Mammary epithelial cell (primary cell): ENCODE measurements at regions of chr11 and their contacts with region 1.

Region 1: DNA sequence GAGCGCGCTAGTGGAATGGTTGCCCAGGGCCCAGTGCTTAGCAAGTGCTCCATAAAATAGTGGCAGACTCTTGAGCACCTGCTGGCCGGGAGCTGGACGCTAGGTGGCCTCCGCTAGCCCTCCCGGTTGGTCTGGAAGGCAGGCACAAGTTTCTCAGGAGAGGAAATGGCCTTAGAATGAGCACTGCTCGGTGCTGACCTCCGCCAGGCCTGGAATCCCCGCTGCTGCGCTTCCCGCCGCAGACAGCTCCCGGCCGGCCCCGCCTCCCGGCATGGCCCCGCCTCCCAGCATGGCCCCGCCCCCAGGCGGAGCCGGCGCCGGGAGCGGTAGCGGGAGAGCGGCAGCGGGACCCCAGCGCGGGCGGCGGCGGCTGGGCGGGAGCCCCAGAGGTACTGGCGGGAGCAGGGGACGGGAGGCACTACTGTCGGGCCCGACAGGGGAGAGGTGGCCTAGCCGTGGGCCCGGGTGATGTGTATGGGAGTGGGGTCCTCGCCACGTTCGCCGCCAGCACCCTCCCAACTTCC is at the start of gene SIPA1:
- DNase-seq: peak; percentile 73
- H3K4me3 ChIP-seq: peak within 1 kb of the TSS; percentile 65 to 73 (median 72)
- H3K27ac ChIP-seq: peak within 1 kb of the TSS; percentile 20
- H3K4me1 ChIP-seq: peaks cover 11% of the 10 kb centered on the region
- H3K27me3 ChIP-seq: no peaks in the 10 kb centered on the region
- CTCF ChIP-seq: peak in 1 of 2 donors; percentile 36
- total RNA-seq, gene SIPA1: 13.2 to 16.1 TPM

Region 2: DNA sequence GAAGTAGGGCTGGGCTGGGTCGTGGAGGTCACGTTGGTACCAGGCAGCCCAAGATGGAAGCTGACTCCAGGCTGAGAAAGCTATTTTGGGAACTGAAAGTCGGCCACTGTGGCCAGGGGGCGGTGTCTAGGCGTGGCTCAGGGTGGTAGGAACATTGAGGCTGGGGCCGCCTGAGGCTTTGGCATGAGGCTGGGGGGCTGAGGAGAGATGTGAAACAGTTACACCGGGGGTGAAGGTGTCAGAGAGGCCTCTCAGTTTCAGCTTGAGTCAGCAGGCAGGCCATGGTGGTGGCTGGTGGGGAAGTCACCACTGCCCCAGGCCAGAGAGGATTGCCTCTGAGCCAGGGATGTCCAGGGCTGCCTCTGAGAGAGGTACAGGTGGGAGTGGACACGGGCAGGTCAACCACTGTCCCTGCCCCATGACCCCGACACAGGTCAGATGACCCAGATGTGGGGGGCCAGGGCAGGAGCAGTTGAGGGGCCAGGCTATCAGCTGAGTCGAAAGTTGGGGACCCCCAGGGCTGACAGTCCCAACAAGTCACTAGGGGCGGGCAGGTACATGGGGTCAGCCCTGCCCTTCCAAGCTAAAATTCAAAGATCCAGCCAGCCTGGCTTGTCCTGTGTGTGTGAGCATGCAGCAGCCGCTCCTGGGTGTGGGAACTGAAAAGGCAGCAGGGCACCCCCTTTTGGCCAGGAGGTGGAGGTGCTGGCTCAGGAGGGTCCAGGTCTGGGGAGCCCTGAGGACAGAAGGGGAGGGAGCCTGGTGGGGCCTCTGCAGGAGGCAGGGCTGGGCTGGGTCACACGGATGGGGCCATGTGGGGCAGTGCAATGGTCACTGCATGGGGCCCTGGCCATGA is 49.4 kb before region 1 on chr11:
- CTCF ChIA-PET with region 1: no interaction called
- dilution Hi-C with region 1: loop called (anchors 10 kb)
- in situ Hi-C with region 1: no loop called
- intact Hi-C with region 1: no loop called
- DNase-seq: no peak
- H3K4me3 ChIP-seq: no peak overlapping the region
- H3K27ac ChIP-seq: no peak overlapping the region
- H3K4me1 ChIP-seq: peaks cover 26% of the 10 kb centered on the region
- H3K27me3 ChIP-seq: no peaks in the 10 kb centered on the region
- CTCF ChIP-seq: peak; percentile 67 to 69

Region 3: DNA sequence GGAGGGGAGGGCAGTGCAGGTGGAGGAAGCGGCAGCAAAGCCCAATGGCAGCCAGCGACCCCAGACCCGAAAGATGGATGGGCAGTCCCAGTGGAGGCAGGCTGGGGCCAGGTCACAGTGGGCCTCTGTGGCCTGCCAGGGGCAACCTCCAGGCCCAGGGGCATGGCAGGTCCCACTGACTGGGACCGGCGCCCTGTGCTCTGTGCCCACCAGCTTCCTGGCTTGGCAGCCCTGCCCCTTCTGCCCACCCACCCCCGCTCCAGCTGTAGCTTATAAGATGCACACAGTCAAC is 38.0 kb before region 1 on chr11:
- CTCF ChIA-PET with region 1: no interaction called
- dilution Hi-C with region 1: loop called (anchors 5 kb)
- in situ Hi-C with region 1: no loop called
- intact Hi-C with region 1: no loop called
- DNase-seq: no peak
- H3K4me3 ChIP-seq: no peak overlapping the region
- H3K27ac ChIP-seq: no peak overlapping the region
- H3K4me1 ChIP-seq: peaks cover 5% of the 10 kb centered on the region
- H3K27me3 ChIP-seq: no peaks in the 10 kb centered on the region
- CTCF ChIP-seq: no peak

Region 4: GRCh38 chr11:65625628-65626342 is 12.1 kb before region 1 on chr11:
- CTCF ChIA-PET with region 1: no interaction called
- dilution Hi-C with region 1: no loop called
- in situ Hi-C with region 1: no loop called
- intact Hi-C with region 1: no loop called
- DNase-seq: no peak
- H3K4me3 ChIP-seq: no peak overlapping the region
- H3K27ac ChIP-seq: no peak overlapping the region
- H3K4me1 ChIP-seq: no peaks in the 10 kb centered on the region
- H3K27me3 ChIP-seq: no peaks in the 10 kb centered on the region
- CTCF ChIP-seq: peak; percentile 44 to 68

Region 5: DNA sequence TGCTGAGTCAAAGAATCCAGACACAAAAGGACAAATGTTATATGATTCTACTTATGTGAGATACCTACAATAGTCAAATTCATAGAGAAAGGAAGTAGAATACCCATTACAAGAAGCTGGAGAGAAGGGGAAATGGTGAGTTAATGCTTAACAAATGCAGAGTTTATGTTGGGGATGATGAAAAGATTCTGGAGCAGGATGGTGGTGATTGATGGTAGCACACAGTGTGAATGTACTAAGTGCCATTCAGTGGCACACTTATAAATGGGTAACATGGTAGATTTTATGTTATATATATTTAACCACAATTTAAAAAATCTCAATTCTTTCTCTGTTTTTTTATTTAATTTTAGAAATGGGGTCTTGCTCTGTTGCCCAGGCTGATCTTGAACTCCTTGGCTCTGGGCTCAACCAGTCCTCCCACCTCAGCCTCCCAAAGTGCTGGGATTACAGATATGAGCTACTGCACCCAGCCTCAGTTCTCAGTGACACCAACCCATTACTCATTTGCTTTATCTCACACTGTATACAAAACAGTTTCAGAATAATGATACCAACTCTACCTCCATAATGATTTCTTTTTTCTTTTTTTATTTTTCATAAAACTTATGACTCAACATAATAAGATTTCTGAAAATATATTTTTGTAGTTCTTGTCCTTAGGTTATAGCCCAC is 34.5 kb after region 1 on chr11:
- CTCF ChIA-PET with region 1: no interaction called
- dilution Hi-C with region 1: loop called (anchors 5 kb)
- in situ Hi-C with region 1: no loop called
- intact Hi-C with region 1: no loop called
- DNase-seq: no peak
- H3K4me3 ChIP-seq: no peak overlapping the region
- H3K27ac ChIP-seq: no peak overlapping the region
- H3K4me1 ChIP-seq: no peaks in the 10 kb centered on the region
- H3K27me3 ChIP-seq: no peaks in the 10 kb centered on the region
- CTCF ChIP-seq: no peak

Region 6: DNA sequence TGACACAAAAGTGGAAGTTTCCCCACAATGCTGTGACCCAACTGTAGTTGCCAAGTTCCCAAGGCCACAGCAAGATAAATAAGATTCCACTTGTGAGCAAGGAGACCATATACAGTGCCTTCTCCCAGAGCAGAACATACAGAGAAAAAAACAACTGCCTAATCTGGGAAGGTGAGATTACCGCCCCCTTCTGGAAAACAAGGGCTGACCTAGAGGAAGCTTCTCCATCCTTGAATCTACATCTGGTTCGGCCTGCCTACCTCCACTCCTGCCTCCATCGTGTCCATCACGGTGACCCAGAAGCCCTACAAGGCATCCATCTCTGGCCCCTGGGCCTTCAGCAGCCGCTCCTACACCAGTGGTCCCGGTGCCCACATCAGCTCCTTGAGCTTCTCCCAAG is 88.8 kb after region 1 on chr11:
- CTCF ChIA-PET with region 1: no interaction called
- dilution Hi-C with region 1: loop called (anchors 5 kb)
- in situ Hi-C with region 1: no loop called
- intact Hi-C with region 1: no loop called
- DNase-seq: no peak
- H3K4me3 ChIP-seq: no peak overlapping the region
- H3K27ac ChIP-seq: no peak overlapping the region
- H3K4me1 ChIP-seq: no peaks in the 10 kb centered on the region
- H3K27me3 ChIP-seq: no peaks in the 10 kb centered on the region
- CTCF ChIP-seq: no peak